B cell (primary cell): ENCODE measurements at regions of chr4 and their contacts with region 1.

Region 1: DNA sequence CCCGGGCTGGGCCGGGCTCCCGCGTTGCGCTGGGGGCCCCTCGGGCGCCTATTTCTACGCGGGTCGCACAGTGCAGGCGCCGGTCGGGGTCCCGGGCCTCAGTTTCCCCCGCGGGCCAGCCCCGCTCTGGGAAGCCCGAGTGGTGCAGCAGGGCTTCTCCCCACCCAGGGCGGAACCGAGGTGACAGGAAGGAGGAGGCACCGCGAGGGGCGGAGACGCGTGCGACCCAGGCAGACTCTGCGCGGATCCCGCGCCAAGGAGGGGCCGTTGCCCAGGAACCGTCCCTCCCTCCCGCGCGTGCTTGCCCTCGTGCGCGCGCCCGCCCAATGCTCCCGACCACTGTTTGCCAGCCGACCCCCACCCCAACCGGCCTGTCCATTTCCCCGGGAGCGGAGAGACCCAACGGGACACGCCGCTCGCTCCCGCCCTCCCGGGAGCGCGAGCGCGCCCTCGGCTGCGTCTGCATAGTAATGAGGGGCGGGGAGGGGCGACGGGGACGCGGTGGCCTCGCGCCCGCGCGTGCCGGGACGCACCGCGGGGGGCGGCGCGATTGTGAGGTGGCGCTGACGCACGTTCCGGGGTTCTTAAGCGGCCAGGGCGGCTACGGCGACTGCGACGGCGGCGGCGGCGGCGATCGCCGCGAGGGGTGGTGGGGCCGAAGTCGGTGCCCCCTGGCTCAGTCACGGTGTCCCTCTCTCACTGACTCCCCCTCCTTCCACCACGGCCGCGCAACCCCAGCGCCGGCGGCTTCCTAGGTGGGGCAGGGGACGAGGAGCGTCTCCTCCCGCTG is at the start of gene CPEB2:
- DNase-seq: peak; percentile 97
- ATAC-seq: peak; percentile 62
- H3K4me3 ChIP-seq: peak within 1 kb of the TSS; percentile 82 to 99 (median 94)
- H3K4me3 Mint-ChIP-seq: peak within 1 kb of the TSS; percentile 93
- H3K27ac ChIP-seq: peak within 1 kb of the TSS; percentile 100
- H3K27ac Mint-ChIP-seq: peak within 1 kb of the TSS; percentile 98
- H3K4me1 ChIP-seq: peaks cover 10 to 12% of the 10 kb centered on the region in 2 donors
- H3K4me1 Mint-ChIP-seq: peaks cover 21% of the 10 kb centered on the region
- H3K27me3 ChIP-seq: no peaks in the 10 kb centered on the region
- H3K27me3 Mint-ChIP-seq: no peaks in the 10 kb centered on the region
- CTCF ChIP-seq: no peak
- total RNA-seq, gene CPEB2: 17.6 and 18.0 TPM in 2 replicates

Region 2: GRCh38 chr4:13548984-13549546 is 1453.0 kb before region 1 on chr4:
- CTCF ChIA-PET with region 1: no interaction called
- POLR2A ChIA-PET with region 1: no interaction called
- intact Hi-C with region 1: loop called (anchors 5 kb)
- DNase-seq: peak; percentile 86
- ATAC-seq: peak; percentile 65
- H3K4me3 ChIP-seq: peak overlapping the region; percentile 3 to 41 (median 31)
- H3K4me3 Mint-ChIP-seq: peak overlapping the region; percentile 77
- H3K27ac ChIP-seq: no peak overlapping the region
- H3K27ac Mint-ChIP-seq: peak overlapping the region; percentile 55
- H3K4me1 ChIP-seq: peaks cover 40 to 44% of the 10 kb centered on the region in 2 donors
- H3K4me1 Mint-ChIP-seq: peaks cover 31% of the 10 kb centered on the region
- H3K27me3 ChIP-seq: peaks cover 2 to 59% (median 47%) of the 10 kb centered on the region in 4 experiments
- H3K27me3 Mint-ChIP-seq: peaks cover 65% of the 10 kb centered on the region
- CTCF ChIP-seq: peak; percentile 89

Region 3: GRCh38 chr4:13654158-13654797 is 1347.8 kb before region 1 on chr4:
- CTCF ChIA-PET with region 1: interaction called, 15 read pairs
- POLR2A ChIA-PET with region 1: no interaction called
- intact Hi-C with region 1: loop called (anchors 1 kb)
- DNase-seq: peak; percentile 80
- ATAC-seq: peak; percentile 91
- H3K4me3 ChIP-seq: peak overlapping the region; percentile 47 to 60 (median 57)
- H3K4me3 Mint-ChIP-seq: peak overlapping the region; percentile 92
- H3K27ac ChIP-seq: no peak overlapping the region
- H3K27ac Mint-ChIP-seq: no peak overlapping the region
- H3K4me1 ChIP-seq: peaks cover 5 to 14% of the 10 kb centered on the region in 2 donors
- H3K4me1 Mint-ChIP-seq: peaks cover 14% of the 10 kb centered on the region
- H3K27me3 ChIP-seq: peaks cover 0 to 8% (median 0%) of the 10 kb centered on the region in 4 experiments
- H3K27me3 Mint-ChIP-seq: peaks cover 11% of the 10 kb centered on the region
- CTCF ChIP-seq: peak; percentile 88

Region 4: GRCh38 chr4:14046642-14047041 is 955.4 kb before region 1 on chr4:
- CTCF ChIA-PET with region 1: no interaction called
- POLR2A ChIA-PET with region 1: no interaction called
- intact Hi-C with region 1: no loop called
- DNase-seq: no peak
- ATAC-seq: no peak
- H3K4me3 ChIP-seq: no peak overlapping the region
- H3K4me3 Mint-ChIP-seq: no peak overlapping the region
- H3K27ac ChIP-seq: no peak overlapping the region
- H3K27ac Mint-ChIP-seq: no peak overlapping the region
- H3K4me1 ChIP-seq: no peaks in the 10 kb centered on the region
- H3K4me1 Mint-ChIP-seq: no peaks in the 10 kb centered on the region
- H3K27me3 ChIP-seq: no peaks in the 10 kb centered on the region
- H3K27me3 Mint-ChIP-seq: peaks cover 5% of the 10 kb centered on the region
- CTCF ChIP-seq: no peak

Region 5: GRCh38 chr4:14478504-14478903 is 523.6 kb before region 1 on chr4:
- CTCF ChIA-PET with region 1: no interaction called
- POLR2A ChIA-PET with region 1: no interaction called
- intact Hi-C with region 1: no loop called
- DNase-seq: no peak
- ATAC-seq: no peak
- H3K4me3 ChIP-seq: no peak overlapping the region
- H3K4me3 Mint-ChIP-seq: no peak overlapping the region
- H3K27ac ChIP-seq: no peak overlapping the region
- H3K27ac Mint-ChIP-seq: no peak overlapping the region
- H3K4me1 ChIP-seq: no peaks in the 10 kb centered on the region
- H3K4me1 Mint-ChIP-seq: no peaks in the 10 kb centered on the region
- H3K27me3 ChIP-seq: peaks cover 0 to 3% (median 0%) of the 10 kb centered on the region in 4 experiments
- H3K27me3 Mint-ChIP-seq: peaks cover 4% of the 10 kb centered on the region
- CTCF ChIP-seq: no peak

Region 6: DNA sequence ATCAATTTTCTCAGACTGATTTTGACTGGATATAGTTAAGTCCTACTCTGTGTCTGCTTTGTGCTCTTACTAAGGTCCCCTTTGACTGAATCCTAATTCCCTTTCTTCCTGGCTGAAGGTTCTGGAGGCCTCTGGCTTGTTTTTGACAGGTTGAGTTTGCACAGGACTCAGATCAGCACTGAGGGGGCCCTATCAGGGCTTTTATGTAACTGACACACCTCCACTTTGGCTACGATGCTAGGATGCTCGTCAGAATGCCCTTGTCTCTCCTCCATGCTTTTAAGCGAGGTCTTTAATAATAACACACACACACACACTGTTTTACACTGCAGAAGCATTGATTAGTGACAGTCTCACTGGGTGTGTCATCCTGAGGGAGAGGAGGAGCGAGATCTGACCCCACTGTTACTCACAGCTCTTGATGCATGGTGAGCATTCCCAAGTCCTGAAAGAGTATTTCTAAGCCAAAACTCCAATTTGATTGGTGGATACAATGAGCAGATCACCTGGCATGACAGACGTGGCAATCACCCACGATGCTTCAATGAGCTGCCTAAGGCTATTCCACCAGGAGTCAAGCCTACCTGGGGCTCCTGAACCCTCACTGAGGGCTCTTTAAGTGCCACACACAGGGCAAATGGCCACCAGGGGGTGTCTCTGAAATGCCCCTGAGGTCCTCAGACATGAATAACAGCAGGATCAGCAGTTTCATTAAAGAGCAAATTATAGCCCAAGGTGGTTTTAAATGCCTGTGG is 130.2 kb before region 1 on chr4:
- CTCF ChIA-PET with region 1: no interaction called
- POLR2A ChIA-PET with region 1: no interaction called
- intact Hi-C with region 1: loop called (anchors 5 kb)
- DNase-seq: peak; percentile 24
- ATAC-seq: no peak
- H3K4me3 ChIP-seq: no peak overlapping the region
- H3K4me3 Mint-ChIP-seq: no peak overlapping the region
- H3K27ac ChIP-seq: no peak overlapping the region
- H3K27ac Mint-ChIP-seq: no peak overlapping the region
- H3K4me1 ChIP-seq: peaks cover under 1% of the 10 kb centered on the region in 2 donors
- H3K4me1 Mint-ChIP-seq: peaks cover 4% of the 10 kb centered on the region
- H3K27me3 ChIP-seq: no peaks in the 10 kb centered on the region
- H3K27me3 Mint-ChIP-seq: peaks cover 9% of the 10 kb centered on the region
- CTCF ChIP-seq: peak; percentile 42

Region 7: GRCh38 chr4:15054541-15054940 is 52.5 kb after region 1 on chr4:
- CTCF ChIA-PET with region 1: no interaction called
- POLR2A ChIA-PET with region 1: no interaction called
- intact Hi-C with region 1: no loop called
- DNase-seq: no peak
- ATAC-seq: no peak
- H3K4me3 ChIP-seq: no peak overlapping the region
- H3K4me3 Mint-ChIP-seq: no peak overlapping the region
- H3K27ac ChIP-seq: no peak overlapping the region
- H3K27ac Mint-ChIP-seq: no peak overlapping the region
- H3K4me1 ChIP-seq: no peaks in the 10 kb centered on the region
- H3K4me1 Mint-ChIP-seq: no peaks in the 10 kb centered on the region
- H3K27me3 ChIP-seq: no peaks in the 10 kb centered on the region
- H3K27me3 Mint-ChIP-seq: no peaks in the 10 kb centered on the region
- CTCF ChIP-seq: no peak

Region 8: GRCh38 chr4:15132739-15133138 is 130.7 kb after region 1 on chr4:
- CTCF ChIA-PET with region 1: no interaction called
- POLR2A ChIA-PET with region 1: no interaction called
- intact Hi-C with region 1: no loop called
- DNase-seq: no peak
- ATAC-seq: no peak
- H3K4me3 ChIP-seq: no peak overlapping the region
- H3K4me3 Mint-ChIP-seq: no peak overlapping the region
- H3K27ac ChIP-seq: no peak overlapping the region
- H3K27ac Mint-ChIP-seq: no peak overlapping the region
- H3K4me1 ChIP-seq: no peaks in the 10 kb centered on the region
- H3K4me1 Mint-ChIP-seq: no peaks in the 10 kb centered on the region
- H3K27me3 ChIP-seq: no peaks in the 10 kb centered on the region
- H3K27me3 Mint-ChIP-seq: peaks cover 16% of the 10 kb centered on the region
- CTCF ChIP-seq: no peak

Region 9: GRCh38 chr4:15457406-15458201 is 455.5 kb after region 1 on chr4:
- CTCF ChIA-PET with region 1: no interaction called
- POLR2A ChIA-PET with region 1: no interaction called
- intact Hi-C with region 1: loop called (anchors 2 kb)
- DNase-seq: peak; percentile 83
- ATAC-seq: peak; percentile 99
- H3K4me3 ChIP-seq: peak overlapping the region in 2 of 5 experiments; percentile 24 to 30
- H3K4me3 Mint-ChIP-seq: peak overlapping the region; percentile 81
- H3K27ac ChIP-seq: peak overlapping the region in 1 of 2 donors; percentile 24
- H3K27ac Mint-ChIP-seq: peak overlapping the region; percentile 80
- H3K4me1 ChIP-seq: peaks cover 14 to 16% of the 10 kb centered on the region in 2 donors
- H3K4me1 Mint-ChIP-seq: peaks cover 19% of the 10 kb centered on the region
- H3K27me3 ChIP-seq: no peaks in the 10 kb centered on the region
- H3K27me3 Mint-ChIP-seq: peaks cover 12% of the 10 kb centered on the region
- CTCF ChIP-seq: peak; percentile 88

Region 10: GRCh38 chr4:16225863-16226815 is 1224.1 kb after region 1 on chr4 and contains the start of gene TAPT1:
- CTCF ChIA-PET with region 1: no interaction called
- POLR2A ChIA-PET with region 1: no interaction called
- intact Hi-C with region 1: loop called (anchors 1 kb)
- DNase-seq: peak; percentile 88
- ATAC-seq: peak; percentile 80
- H3K4me3 ChIP-seq: peak within 1 kb of the TSS; percentile 77 to 95 (median 87)
- H3K4me3 Mint-ChIP-seq: peak within 1 kb of the TSS; percentile 99
- H3K27ac ChIP-seq: peak within 1 kb of the TSS; percentile 69 to 92
- H3K27ac Mint-ChIP-seq: peak within 1 kb of the TSS; percentile 99
- H3K4me1 ChIP-seq: peaks cover 33 to 54% of the 10 kb centered on the region in 2 donors
- H3K4me1 Mint-ChIP-seq: peaks cover 66% of the 10 kb centered on the region
- H3K27me3 ChIP-seq: no peaks in the 10 kb centered on the region
- H3K27me3 Mint-ChIP-seq: no peaks in the 10 kb centered on the region
- CTCF ChIP-seq: no peak
- total RNA-seq, gene TAPT1: 76.0 and 88.5 TPM in 2 replicates